ENCODE measurements at regions of chr12 and their contacts with region 1.

Region 1: GRCh38 chr12:2853626-2854025 is 3.2 kb downstream of the TEX52 start:
- DNase-seq: peak; percentile 90
- ATAC-seq: peak; percentile 92

Region 2: DNA sequence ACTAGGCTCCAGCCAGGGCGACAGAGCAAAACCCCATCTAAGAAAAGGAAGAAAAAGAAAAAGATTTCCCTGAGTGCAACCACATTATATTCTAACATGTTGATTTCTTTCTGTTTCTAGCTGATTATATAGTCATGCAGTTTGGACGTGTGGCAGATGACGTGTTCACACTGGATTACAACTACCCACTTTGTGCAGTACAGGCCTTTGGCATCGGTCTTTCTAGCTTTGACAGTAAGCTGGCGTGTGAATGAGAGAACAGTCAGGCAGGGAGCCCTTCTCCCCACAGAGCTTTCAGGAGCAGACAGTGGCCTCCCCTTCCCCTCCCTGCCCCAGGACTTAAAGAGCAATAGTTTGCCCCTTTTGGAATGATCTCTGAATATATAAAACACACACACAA is 85.6 kb after region 1 on chr12:
- intact Hi-C with region 1: loop called (anchors 5 kb)
- DNase-seq: no peak
- ATAC-seq: no peak

Measured in Right ventricle myocardium superior (tissue), 1 donor.